GM12878 (cell line): ENCODE measurements at regions of chr2 and their contacts with region 1.

Region 1: DNA sequence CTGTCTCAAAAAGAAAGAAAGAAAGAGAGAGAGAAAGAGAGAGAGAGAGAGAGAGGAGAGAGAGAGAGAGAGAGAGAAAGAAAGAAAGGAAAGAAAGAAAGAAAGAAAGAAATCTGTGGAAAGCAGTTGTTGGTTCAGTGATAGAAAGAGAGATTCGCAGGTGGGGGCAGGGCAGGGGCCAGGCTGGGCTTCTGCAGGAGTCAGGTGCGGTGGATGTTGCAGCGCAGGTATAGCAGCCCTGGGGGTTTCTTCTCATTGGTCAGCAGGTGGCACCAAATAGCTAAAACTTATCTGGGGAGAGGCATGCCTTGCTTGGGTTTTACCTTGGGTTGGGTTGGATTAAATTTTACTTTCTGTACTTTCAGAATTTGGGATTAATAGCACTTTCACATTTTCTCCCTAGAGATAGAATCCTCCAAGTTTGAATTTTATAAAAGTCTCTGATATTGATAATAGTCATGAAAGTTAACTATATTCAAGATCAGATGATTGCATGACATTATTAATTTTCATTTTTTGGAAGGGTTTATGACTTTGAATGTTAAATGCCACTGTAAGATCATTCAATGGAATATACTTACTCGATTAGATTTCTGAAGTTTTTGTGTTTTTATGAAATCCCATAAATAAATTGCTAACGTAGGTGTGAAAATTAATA is 66.6 kb downstream of the SPTBN1 start:
- DNase-seq: peak; percentile 47
- ATAC-seq: peak; percentile 94
- H3K4me3 ChIP-seq: no peak overlapping the region
- H3K27ac ChIP-seq: no peak overlapping the region
- H3K4me1 ChIP-seq: peaks cover 15% of the 10 kb centered on the region
- H3K27me3 ChIP-seq: no peaks in the 10 kb centered on the region
- CTCF ChIP-seq: peak; percentile 71 to 84 (median 72)
- EP300 ChIP-seq: no peak
- POLR2A ChIP-seq: no peak
- RAD21 ChIP-seq: peak; percentile 93

Region 2: GRCh38 chr2:54545702-54546450 is 23.1 kb after region 1 on chr2:
- CTCF ChIA-PET with region 1: interaction called, 15 read pairs
- POLR2A ChIA-PET with region 1: interaction called, 3 read pairs
- RAD21 ChIA-PET with region 1: interaction called, 13 read pairs
- SMC1A ChIA-PET with region 1: interaction called, 30 read pairs
- in situ Hi-C with region 1: no loop called
- intact Hi-C with region 1: no loop called
- DNase-seq: no peak
- ATAC-seq: peak; percentile 82
- H3K4me3 ChIP-seq: no peak overlapping the region
- H3K27ac ChIP-seq: no peak overlapping the region
- H3K4me1 ChIP-seq: peaks cover 4% of the 10 kb centered on the region
- H3K27me3 ChIP-seq: no peaks in the 10 kb centered on the region
- CTCF ChIP-seq: no peak
- EP300 ChIP-seq: no peak
- POLR2A ChIP-seq: no peak
- RAD21 ChIP-seq: no peak

Region 3: GRCh38 chr2:54570925-54571694 is 48.4 kb after region 1 on chr2:
- CTCF ChIA-PET with region 1: interaction called, 7 read pairs
- POLR2A ChIA-PET with region 1: interaction called, 17 read pairs
- RAD21 ChIA-PET with region 1: interaction called, 55 read pairs
- SMC1A ChIA-PET with region 1: interaction called, 46 read pairs
- in situ Hi-C with region 1: no loop called
- intact Hi-C with region 1: loop called (anchors 2 kb)
- DNase-seq: peak; percentile 98
- ATAC-seq: peak; percentile 55
- H3K4me3 ChIP-seq: peak overlapping the region; percentile 49; the same call in 1 of the 2 replicates
- H3K27ac ChIP-seq: peak overlapping the region; percentile 100
- H3K4me1 ChIP-seq: peaks cover 73% of the 10 kb centered on the region
- H3K27me3 ChIP-seq: no peaks in the 10 kb centered on the region
- CTCF ChIP-seq: no peak
- EP300 ChIP-seq: peak; percentile 80 to 96
- POLR2A ChIP-seq: peak; percentile 74
- RAD21 ChIP-seq: no peak; the same call in 1 of the 2 replicates

Region 4: GRCh38 chr2:54613794-54614257 is 91.1 kb after region 1 on chr2:
- CTCF ChIA-PET with region 1: interaction called, 3 read pairs
- POLR2A ChIA-PET with region 1: no interaction called
- RAD21 ChIA-PET with region 1: interaction called, 8 read pairs
- SMC1A ChIA-PET with region 1: interaction called, 16 read pairs
- in situ Hi-C with region 1: no loop called
- intact Hi-C with region 1: no loop called
- DNase-seq: no peak
- ATAC-seq: peak; percentile 57
- H3K4me3 ChIP-seq: no peak overlapping the region
- H3K27ac ChIP-seq: no peak overlapping the region
- H3K4me1 ChIP-seq: peaks cover 2% of the 10 kb centered on the region; the same call in 1 of the 2 replicates
- H3K27me3 ChIP-seq: no peaks in the 10 kb centered on the region
- CTCF ChIP-seq: no peak
- EP300 ChIP-seq: no peak
- POLR2A ChIP-seq: no peak
- RAD21 ChIP-seq: no peak

Region 5: DNA sequence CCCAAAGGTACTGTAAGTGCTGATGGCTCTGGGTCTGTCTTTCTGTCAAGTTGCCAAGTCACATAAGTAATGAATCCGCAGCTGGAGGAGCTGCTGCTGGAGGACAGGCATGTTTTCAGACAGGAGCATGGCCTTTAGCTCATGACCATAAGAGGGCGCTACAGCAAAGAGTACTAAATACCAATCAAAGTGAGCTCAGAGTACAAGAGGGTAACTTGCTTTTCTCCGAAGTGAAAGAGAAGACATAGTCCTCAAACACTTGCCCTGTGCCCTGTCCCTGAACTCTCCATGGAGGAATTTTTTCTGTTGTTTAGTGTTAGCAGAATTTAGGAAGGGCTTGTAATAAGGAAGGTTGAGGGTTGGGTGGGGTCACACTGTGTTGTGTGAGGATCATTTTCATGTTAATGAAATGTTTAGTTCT is 142.7 kb after region 1 on chr2:
- CTCF ChIA-PET with region 1: interaction called, 77 read pairs
- POLR2A ChIA-PET with region 1: interaction called, 4 read pairs
- RAD21 ChIA-PET with region 1: interaction called, 27 read pairs
- SMC1A ChIA-PET with region 1: interaction called, 47 read pairs
- in situ Hi-C with region 1: no loop called
- intact Hi-C with region 1: no loop called
- DNase-seq: no peak
- ATAC-seq: peak; percentile 80
- H3K4me3 ChIP-seq: no peak overlapping the region
- H3K27ac ChIP-seq: no peak overlapping the region
- H3K4me1 ChIP-seq: no peaks in the 10 kb centered on the region
- H3K27me3 ChIP-seq: no peaks in the 10 kb centered on the region
- CTCF ChIP-seq: peak; percentile 55 to 71 (median 71)
- EP300 ChIP-seq: no peak
- POLR2A ChIP-seq: no peak
- RAD21 ChIP-seq: peak; percentile 69

Region 6: DNA sequence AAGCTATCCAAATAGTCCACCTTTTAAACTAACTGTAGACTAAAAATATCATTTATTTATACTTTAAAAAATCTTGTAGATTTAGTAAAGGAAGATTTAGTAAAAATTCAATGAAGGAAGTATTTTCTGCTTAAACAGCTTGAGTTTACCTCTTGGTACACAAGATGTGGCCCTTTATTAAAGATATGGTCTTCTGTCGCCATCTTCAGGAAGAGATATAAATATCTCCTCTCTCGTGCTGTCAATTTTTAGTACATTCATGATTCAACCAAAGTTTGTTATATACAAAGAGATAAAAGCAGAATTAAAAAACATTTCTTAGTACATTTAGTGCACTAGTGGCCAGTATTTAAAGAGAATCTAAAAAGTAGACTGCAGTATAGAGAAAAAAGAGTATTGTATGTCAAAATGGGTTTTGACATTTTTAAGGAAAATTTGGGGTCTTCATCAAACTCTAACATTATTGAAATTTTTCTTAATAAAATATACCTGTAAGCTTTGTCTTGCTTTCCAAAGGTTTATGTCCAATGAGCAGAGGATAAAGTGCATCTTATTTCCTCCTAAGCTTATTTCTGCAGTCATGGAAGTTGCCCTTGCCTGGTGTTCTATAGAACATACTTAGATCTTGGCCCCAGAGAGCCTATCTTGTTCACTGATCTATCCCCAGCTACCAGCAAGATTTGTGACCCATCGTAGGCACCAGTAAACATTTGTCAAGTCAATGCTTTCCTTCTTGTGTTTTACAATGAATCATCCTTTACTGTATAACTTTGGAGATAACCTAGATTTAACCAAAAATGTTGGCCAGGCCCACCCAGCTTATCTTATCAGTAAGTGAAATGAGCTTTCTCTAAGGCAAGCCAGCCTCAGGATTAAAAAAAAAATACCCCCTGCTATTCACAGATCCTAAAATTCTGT is 182.2 kb after region 1 on chr2:
- CTCF ChIA-PET with region 1: interaction called, 177 read pairs
- POLR2A ChIA-PET with region 1: interaction called, 3 read pairs
- RAD21 ChIA-PET with region 1: interaction called, 98 read pairs
- SMC1A ChIA-PET with region 1: interaction called, 125 read pairs
- in situ Hi-C with region 1: loop called (anchors 10 kb)
- intact Hi-C with region 1: loop called (anchors 1 kb)
- DNase-seq: no peak
- ATAC-seq: peak; percentile 78
- H3K4me3 ChIP-seq: no peak overlapping the region
- H3K27ac ChIP-seq: no peak overlapping the region
- H3K4me1 ChIP-seq: no peaks in the 10 kb centered on the region
- H3K27me3 ChIP-seq: peaks cover 0 to 5% of the 10 kb centered on the region in 2 experiments; a peak in 2 of 4 replicates
- CTCF ChIP-seq: peak; percentile 35 to 77 (median 47); a peak in 4 of 6 replicates
- EP300 ChIP-seq: no peak
- POLR2A ChIP-seq: no peak
- RAD21 ChIP-seq: peak; percentile 86

Region 7: DNA sequence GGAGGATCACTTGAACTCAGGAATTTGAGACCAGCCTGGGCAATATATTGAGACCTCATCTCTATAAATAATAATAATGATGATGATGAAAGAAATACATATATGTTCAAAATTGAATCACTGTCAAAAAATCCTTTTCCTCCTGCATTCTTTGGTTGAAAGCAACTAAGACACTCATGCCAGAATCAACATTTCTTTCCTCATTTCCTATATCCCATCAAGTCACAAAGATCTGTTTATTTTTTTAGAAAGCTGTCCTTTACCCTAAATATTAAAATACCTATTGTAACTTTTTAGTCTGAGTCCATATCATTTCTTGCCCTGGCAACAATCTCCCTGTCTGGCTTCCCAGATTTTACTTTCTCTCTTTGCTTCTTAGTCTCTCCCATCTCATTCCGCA is 1126.5 kb after region 1 on chr2:
- CTCF ChIA-PET with region 1: no interaction called
- POLR2A ChIA-PET with region 1: no interaction called
- RAD21 ChIA-PET with region 1: no interaction called
- SMC1A ChIA-PET with region 1: no interaction called
- in situ Hi-C with region 1: no loop called
- intact Hi-C with region 1: no loop called
- DNase-seq: no peak
- ATAC-seq: no peak
- H3K4me3 ChIP-seq: no peak overlapping the region
- H3K27ac ChIP-seq: no peak overlapping the region
- H3K4me1 ChIP-seq: no peaks in the 10 kb centered on the region
- H3K27me3 ChIP-seq: no peaks in the 10 kb centered on the region
- CTCF ChIP-seq: no peak
- EP300 ChIP-seq: no peak
- POLR2A ChIP-seq: no peak
- RAD21 ChIP-seq: no peak